ENCODE measurements at regions of chr15 and their contacts with region 1.

Region 1: DNA sequence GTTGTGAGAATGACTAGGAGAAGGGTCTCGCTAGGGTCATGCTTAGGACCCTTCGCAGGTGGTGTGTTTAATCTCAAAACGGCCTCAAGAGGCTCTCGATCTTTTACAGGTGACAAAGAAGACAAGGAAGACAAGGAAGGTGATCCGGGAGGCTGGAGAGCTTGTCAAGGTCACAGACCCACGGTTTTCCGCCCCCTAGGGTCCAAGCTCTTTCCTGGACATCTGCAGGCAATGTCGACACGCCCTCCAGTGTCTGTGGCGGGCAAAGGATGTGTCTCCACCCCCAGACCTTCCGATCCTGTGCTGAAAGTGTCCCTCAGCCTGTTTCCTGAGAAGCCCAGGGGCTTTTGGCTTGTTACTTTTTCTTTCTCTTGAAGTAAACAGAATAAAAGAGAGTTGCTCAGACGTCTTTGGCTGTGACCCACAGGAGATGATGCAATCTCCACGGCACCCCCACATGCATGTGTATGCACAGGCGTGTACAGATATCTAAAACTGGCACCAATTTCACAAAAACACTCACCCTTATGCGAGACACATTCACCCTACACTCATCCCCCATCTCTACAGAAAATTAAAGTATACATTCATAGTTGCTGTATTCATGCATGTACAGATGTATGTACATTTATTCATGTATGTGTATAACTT is 108.8 kb downstream of the KLF13 start:
- DNase-seq: peak; percentile 94
- H3K4me3 ChIP-seq: peak overlapping the region; percentile 43
- H3K27ac ChIP-seq: peak overlapping the region; percentile 72
- H3K4me1 ChIP-seq: peaks cover 60% of the 10 kb centered on the region
- CTCF ChIP-seq: peak; percentile 98

Region 2: GRCh38 chr15:31200735-31201151 is 234.6 kb before region 1 on chr15:
- CTCF ChIA-PET with region 1: interaction called, 6 read pairs
- POLR2A ChIA-PET with region 1: interaction called, 3 read pairs
- intact Hi-C with region 1: loop called (anchors 1 kb)
- DNase-seq: peak; percentile 75
- H3K4me3 ChIP-seq: no peak overlapping the region
- H3K27ac ChIP-seq: no peak overlapping the region
- H3K4me1 ChIP-seq: peaks cover 18% of the 10 kb centered on the region
- CTCF ChIP-seq: peak; percentile 78

Region 3: GRCh38 chr15:31265871-31266711 is 169.3 kb before region 1 on chr15:
- CTCF ChIA-PET with region 1: interaction called, 36 read pairs
- POLR2A ChIA-PET with region 1: interaction called, 7 read pairs
- intact Hi-C with region 1: loop called (anchors 1 kb)
- DNase-seq: peak; percentile 95
- H3K4me3 ChIP-seq: peak overlapping the region; percentile 35
- H3K27ac ChIP-seq: peak overlapping the region; percentile 97
- H3K4me1 ChIP-seq: peaks cover 100% of the 10 kb centered on the region
- CTCF ChIP-seq: peak; percentile 58; the same call in 1 of the 2 replicates

Region 4: DNA sequence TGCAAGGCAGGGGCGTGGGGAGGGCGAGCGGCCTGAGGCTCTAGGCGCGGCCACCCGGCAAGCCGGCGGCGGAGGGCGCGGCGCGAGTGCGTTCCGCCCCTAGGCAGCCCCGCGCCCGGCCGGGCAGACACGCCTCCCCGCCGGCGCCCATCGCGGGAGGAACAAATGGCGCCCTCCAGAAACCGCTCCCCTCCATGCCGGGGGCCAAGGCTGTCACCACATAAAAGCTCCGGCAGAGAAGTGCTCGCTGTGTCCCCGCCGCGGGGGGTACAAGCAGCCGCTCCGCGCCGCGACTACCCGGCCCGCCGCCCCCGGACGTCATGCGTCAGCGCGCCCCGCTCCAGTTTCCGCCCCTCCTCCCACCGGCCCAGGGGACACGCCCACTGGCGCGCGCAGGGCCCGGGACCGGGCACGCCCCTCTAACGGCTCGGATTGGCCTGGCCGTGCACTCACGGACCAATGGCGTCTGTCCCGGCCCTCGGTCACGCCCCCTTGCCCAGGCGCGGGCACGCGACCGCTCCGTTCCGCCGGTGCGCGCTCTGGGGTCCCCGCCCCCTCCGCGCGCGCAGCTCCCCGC is 109.1 kb before region 1 on chr15:
- CTCF ChIA-PET with region 1: interaction called, 4 read pairs
- POLR2A ChIA-PET with region 1: interaction called, 4 read pairs
- intact Hi-C with region 1: loop called (anchors 1 kb)
- DNase-seq: peak; percentile 99
- H3K4me3 ChIP-seq: peak overlapping the region; percentile 81
- H3K27ac ChIP-seq: peak overlapping the region; percentile 94
- H3K4me1 ChIP-seq: peaks cover 46% of the 10 kb centered on the region
- CTCF ChIP-seq: no peak; the same call in 1 of the 2 replicates

Region 5: DNA sequence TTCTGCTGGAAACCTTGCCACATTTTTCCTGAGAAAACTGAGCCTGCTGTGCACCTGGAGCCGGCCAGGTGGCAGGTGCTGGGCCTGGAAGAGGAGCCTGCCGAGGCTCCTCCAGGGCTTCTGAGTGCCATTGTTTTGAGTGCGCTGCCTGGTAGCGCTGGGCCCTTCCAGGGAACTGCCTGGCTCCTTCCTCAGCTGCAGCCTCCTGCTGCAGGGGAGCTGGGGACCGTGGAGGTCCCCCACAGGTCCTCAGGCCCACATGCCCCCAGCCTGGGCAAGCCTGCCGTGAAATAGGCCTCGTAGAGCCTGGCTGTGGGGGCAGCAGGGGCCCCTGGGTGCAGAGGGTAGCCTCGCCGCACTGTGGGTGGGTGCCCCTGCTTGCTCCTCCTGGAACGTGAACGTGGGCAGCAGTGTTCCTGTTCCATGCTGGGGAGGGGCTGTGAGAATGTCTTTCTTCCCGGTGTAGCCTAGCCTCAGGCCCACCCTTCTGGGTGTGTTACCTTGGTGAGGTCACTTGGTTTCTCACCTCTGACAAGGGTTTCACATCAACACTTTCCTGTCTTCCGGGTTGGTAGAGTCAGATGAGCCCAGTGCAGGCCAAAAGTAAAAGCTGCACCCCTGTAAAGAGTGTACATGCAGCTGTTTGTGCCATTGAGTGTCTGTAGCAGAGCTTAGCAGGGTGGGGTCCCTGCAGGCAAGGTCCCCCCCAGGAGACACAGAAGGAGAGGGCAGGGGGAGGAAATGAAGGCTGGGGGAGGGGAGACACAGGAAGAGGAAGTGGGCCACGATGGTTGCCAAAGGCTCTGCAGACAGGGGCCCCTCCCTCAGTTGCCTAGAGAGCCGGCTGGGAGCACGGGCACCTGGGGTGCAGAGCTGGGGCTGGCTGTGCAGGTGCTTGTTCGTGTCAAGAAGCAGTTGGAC is 74.3 kb before region 1 on chr15:
- CTCF ChIA-PET with region 1: interaction called, 8 read pairs
- POLR2A ChIA-PET with region 1: no interaction called
- intact Hi-C with region 1: loop called (anchors 2 kb)
- DNase-seq: peak; percentile 97
- H3K4me3 ChIP-seq: peak overlapping the region; percentile 61
- H3K27ac ChIP-seq: peak overlapping the region; percentile 98
- H3K4me1 ChIP-seq: peaks cover 98% of the 10 kb centered on the region
- CTCF ChIP-seq: no peak

Region 6: DNA sequence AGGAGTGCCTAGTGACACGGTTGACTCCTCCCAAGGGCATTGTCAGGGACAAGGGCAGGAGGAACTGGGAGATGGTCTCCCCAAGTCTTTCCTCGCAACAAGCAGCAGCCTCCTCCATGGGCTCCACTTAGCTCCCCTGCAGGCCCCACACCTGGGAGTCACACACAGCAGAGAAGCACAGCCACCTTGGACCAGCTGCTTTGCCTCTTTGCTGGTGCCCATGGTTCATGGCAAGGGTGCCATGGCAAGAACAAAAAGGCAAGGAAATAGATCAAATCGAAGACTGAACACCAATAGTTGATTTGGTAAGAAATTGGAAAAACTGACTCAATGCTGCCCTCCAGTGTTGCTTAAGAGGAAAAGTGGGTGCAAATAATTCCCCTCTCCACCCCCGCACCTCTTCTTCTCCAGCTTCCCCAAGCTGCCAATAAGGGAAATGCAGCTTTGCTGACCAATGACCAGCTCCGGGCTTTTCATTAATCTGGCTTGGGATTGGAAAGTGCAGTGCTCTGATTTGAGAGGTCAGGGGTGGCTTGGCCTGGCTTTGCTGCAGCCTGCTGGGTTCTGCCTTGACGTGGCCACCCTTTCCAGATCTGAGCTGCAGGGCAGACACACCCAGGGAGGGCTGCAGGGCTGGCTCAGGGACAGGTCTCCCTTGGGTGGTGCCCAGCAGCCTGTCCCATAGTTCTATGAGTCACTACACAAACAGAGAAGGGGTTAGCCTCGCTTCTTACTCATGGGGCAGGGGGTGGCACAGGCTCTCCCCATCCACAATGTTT is 53.2 kb after region 1 on chr15:
- CTCF ChIA-PET with region 1: interaction called, 121 read pairs
- POLR2A ChIA-PET with region 1: interaction called, 33 read pairs
- intact Hi-C with region 1: loop called (anchors 1 kb)
- DNase-seq: peak; percentile 83
- H3K4me3 ChIP-seq: no peak overlapping the region
- H3K27ac ChIP-seq: no peak overlapping the region
- H3K4me1 ChIP-seq: peaks cover 38% of the 10 kb centered on the region
- CTCF ChIP-seq: peak; percentile 96

Measured in OCI-LY7 (cell line).